Left lung (tissue), 14 donors: ENCODE measurements at regions of chr11 and their contacts with region 1.

Region 1: DNA sequence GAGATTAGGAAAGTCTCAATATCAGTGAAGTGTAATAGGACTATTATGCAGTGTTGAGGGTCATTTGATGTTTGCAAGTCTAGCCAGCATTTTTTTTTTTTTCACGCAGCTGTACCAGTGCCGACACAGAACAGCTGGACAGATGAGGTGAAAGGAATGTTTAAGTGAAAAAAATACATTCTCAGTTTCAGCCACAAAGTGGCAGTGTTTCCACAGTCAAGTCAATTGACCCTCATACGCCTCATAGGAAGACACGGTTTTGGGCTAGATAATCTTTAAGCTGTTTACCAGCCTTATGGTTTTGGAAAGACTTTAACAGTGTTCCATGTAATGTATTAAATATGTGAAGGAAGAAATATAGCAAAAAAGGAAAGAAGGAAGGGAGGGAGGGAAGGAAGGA is 349.9 kb upstream of the ANO3 start:
- DNase-seq: peak in 2 of 4 donors; percentile 79 to 89
- ATAC-seq: peak; percentile 87
- H3K4me3 ChIP-seq: no peak overlapping the region
- H3K27ac ChIP-seq: no peak overlapping the region
- H3K4me1 ChIP-seq: no peaks in the 10 kb centered on the region
- H3K27me3 ChIP-seq: no peaks in the 10 kb centered on the region
- CTCF ChIP-seq: peak in 1 of 2 donors; percentile 57

Region 2: DNA sequence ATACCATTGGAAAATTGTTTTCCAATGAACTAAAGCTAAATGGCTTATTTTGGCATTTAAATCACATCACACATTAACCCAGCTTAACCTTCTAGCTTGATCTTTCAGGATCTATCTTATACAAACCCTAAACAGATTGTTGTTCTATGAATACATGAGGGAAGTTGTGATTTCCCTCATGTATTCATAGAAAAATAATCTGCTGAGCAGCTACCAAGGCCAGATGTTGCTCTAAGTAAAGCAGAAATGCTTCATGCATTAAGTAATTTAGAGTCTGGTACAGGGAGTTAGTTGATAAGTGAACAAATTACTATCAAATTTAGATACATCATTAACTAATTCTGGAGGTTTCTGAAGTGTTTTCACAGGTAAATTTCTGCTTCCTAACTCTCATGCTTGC is 145.3 kb after region 1 on chr11:
- intact Hi-C with region 1: no loop called
- DNase-seq: no peak
- ATAC-seq: no peak
- H3K4me3 ChIP-seq: no peak overlapping the region
- H3K27ac ChIP-seq: no peak overlapping the region
- H3K4me1 ChIP-seq: no peaks in the 10 kb centered on the region
- H3K27me3 ChIP-seq: no peaks in the 10 kb centered on the region
- CTCF ChIP-seq: no peak

Region 3: GRCh38 chr11:26276798-26277424 is 294.9 kb after region 1 on chr11:
- intact Hi-C with region 1: loop called in 1 of 2 experiments (anchors 5 kb)
- DNase-seq: peak in 2 of 4 donors; percentile 48 to 65
- ATAC-seq: peak; percentile 93
- H3K4me3 ChIP-seq: no peak overlapping the region
- H3K27ac ChIP-seq: no peak overlapping the region
- H3K4me1 ChIP-seq: no peaks in the 10 kb centered on the region
- H3K27me3 ChIP-seq: no peaks in the 10 kb centered on the region
- CTCF ChIP-seq: peak; percentile 76 to 93